ENCODE measurements at regions of chr14 and their contacts with region 1.

Region 1: DNA sequence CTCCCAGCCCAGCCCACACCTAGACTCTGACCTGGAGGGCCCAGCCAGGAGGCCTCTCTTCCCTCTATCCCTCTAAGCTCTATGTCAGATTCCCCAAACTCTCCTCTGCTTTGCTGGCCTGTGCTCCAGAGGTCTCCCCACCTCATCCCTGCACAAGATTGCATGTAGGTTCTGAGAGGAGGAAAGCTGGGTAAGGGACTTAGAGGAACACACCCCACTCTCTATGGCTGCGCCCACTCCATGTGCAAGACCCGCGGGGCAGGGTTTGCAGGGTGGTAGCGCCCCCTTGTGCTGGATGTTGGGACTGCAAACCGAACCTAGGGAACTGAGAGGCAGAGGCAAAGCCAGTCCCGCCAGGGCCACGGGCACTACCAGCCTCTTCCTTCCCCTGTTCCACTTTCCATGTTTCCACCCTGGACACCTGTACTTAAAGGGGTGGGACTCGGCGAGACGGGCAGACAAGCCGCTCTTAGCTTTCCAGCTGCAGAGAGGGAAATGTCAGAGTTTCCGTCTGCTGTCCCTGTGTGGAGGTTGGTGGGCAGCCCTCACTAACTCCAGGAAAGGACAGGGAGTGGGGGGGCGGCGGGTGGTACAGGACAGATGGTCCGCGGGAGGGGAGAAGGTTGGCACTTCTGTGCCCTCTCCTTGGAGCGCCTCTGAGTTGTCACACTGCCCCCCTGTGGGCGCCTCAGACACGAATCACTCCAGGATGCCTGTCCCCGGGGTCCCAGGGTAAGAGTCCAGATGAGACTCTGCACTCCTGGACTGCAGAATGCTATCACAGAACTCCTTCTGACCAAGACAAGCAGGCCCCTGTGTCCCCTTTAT is 16.8 kb downstream of the MMP14 start:
- DNase-seq: peak; percentile 96

Region 2: DNA sequence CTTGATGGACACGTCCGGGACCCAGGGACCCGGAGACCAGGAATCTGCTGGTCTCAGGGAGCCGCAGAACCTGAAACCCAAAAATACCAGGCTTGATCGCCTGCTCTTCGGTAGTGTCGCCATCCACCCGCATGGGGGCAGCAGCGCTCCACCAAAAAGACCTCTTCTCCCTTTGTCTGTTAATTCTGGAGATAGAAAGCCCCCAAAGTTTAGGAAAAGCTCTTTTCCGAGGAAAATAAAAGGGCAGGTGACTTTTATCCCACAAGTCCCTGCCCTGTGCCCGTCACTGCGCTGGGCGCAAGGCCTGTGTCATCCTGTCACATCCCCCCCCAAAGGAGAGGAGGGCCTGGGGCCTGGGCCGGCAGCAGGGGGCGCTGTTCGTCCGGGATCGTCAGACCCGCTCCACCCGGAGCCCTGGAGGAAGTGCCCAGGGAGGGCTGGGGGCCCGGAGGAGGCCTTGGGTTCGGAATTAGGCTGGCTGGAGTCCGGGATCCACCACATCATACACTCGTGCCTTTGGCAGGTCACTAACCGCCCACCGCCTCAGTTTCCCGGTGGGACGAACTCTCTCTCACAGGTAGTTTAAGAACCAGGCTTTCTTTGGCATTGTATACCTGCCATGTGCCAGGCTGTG is 296.0 kb before region 1 on chr14:
- intact Hi-C with region 1: loop called (anchors 2 to 10 kb)
- DNase-seq: peak; percentile 96

Region 3: GRCh38 chr14:22653012-22653621 is 200.0 kb before region 1 on chr14:
- intact Hi-C with region 1: loop called in 1 of 2 experiments (anchors 10 kb)
- DNase-seq: no peak

Region 4: GRCh38 chr14:22791301-22791700 is 61.9 kb before region 1 on chr14:
- intact Hi-C with region 1: no loop called
- DNase-seq: no peak

Region 5: DNA sequence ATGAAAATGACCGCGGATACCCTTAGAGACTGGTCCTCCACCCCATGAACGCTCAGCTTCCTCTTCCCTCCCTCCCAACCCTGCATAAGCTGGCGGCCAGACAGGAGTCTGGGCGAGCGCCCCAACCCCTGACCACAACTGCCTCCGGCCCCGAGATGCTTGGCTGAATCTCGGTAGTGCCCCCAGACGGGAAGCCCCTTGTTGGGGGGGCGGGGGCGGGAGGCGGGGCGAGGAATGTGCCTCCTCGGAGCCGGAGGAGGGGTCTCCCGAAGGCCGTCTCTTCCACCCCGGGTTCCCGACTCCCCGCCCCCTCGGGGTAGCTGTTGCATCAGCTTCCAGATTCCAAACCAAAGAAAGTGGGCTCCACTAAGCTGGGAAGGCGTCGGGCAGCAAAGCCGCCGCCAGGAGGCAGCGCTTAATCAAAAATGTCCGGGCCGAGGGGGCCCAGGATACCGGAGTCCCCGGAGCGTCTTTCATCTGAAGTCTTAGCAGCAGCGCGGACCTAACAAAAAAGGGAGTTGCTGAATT is 30.5 kb before region 1 on chr14:
- intact Hi-C with region 1: loop called in 1 of 2 experiments (anchors 2 kb)
- DNase-seq: peak; percentile 94

Region 6: DNA sequence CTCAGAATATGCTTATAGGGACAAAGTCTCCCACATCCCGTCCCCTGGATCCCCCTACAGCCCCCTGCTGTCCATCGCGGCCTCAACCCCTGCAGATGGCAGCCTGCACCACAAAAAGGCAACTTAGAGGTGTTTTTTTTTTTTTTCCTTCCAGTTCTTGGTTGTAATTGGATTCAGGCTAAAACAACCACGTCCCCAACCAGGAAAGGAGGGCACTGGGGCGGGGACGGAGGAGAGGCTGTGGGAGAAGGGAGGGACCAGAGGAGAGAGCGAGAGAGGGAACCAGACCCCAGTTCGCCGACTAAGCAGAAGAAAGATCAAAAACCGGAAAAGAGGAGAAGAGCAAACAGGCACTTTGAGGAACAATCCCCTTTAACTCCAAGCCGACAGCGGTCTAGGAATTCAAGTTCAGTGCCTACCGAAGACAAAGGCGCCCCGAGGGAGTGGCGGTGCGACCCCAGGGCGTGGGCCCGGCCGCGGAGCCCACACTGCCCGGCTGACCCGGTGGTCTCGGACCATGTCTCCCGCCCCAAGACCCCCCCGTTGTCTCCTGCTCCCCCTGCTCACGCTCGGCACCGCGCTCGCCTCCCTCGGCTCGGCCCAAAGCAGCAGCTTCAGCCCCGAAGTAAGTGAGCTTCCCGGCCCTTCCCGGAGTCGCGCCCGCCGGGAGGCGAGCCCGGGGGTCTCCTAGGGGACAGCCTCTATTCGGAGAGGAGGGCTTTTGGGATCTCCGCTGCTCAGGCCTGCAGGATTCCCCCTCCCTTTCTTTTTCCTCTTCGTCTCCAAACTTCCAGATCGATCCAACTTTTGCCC is 16.6 kb before region 1 on chr14 and contains the start of gene MMP14:
- intact Hi-C with region 1: loop called in 1 of 2 experiments (anchors 2 kb)
- DNase-seq: peak; percentile 91
- total RNA-seq, gene MMP14: 229 to 234 TPM